CD4-positive, alpha-beta memory T cell (primary cell): ENCODE measurements at regions of chr1 and their contacts with region 1.

Region 1: DNA sequence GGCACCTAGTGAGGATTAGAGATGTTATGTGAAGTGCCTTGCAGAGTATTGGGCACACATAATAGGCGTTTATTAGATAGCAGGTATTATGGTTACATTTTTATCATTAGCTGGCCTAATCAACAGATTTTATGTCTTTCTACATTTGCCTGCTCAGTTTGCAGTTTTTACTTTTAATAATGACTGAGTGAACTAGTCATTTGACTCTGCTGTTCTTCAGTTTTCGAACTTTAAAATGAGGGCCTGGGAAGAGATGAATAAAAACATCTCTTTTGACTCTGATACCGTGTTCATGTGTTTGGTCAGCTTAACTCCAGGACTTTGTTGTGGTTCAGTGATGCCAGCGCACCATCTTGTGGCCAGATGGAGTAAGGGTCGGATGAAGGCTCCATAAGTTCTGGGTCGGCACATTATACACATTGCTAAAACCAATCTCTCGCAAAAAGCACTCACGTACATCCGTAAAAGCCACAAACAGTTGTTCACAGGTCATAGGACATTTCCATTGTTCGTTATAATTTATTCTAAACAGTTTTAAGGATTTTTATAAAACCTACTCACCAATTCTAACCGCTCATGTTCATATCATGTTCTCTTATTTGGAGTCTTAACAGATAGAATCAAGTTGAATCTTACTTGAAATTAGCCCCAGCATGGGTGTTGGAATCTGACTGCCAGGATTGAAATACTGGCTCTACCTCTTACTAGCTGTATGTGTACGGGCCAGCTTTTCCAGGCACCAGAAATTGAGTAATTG is 78.4 kb upstream of the GPR88 start:
- DNase-seq: peak; percentile 57 to 70 (median 62)
- H3K4me3 ChIP-seq: no peak overlapping the region
- H3K4me3 Mint-ChIP-seq: peak overlapping the region in 7 of 8 donors; percentile 40 to 75 (median 63)
- H3K27ac ChIP-seq: peak overlapping the region; percentile 8
- H3K27ac Mint-ChIP-seq: peak overlapping the region; percentile 65 to 91 (median 90)
- H3K4me1 ChIP-seq: peaks cover 70% of the 10 kb centered on the region
- H3K4me1 Mint-ChIP-seq: peaks cover 44 to 86% (median 60%) of the 10 kb centered on the region in 4 donors
- H3K27me3 ChIP-seq: no peaks in the 10 kb centered on the region
- H3K27me3 Mint-ChIP-seq: no peaks in the 10 kb centered on the region

Region 2: GRCh38 chr1:100037927-100038659 is 421.4 kb before region 1 on chr1:
- CTCF ChIA-PET with region 1: interaction called, 3 read pairs
- POLR2A ChIA-PET with region 1: no interaction called
- intact Hi-C with region 1: loop called (anchors 5 kb)
- DNase-seq: peak; percentile 88 to 90 (median 89)
- H3K4me3 ChIP-seq: peak overlapping the region; percentile 43 to 75
- H3K4me3 Mint-ChIP-seq: peak overlapping the region; percentile 91 to 100 (median 98)
- H3K27ac ChIP-seq: peak overlapping the region; percentile 99
- H3K27ac Mint-ChIP-seq: peak overlapping the region; percentile 98 to 100 (median 99)
- H3K4me1 ChIP-seq: peaks cover 50% of the 10 kb centered on the region
- H3K4me1 Mint-ChIP-seq: peaks cover 33 to 66% (median 46%) of the 10 kb centered on the region in 4 donors
- H3K27me3 ChIP-seq: no peaks in the 10 kb centered on the region
- H3K27me3 Mint-ChIP-seq: no peaks in the 10 kb centered on the region

Region 3: DNA sequence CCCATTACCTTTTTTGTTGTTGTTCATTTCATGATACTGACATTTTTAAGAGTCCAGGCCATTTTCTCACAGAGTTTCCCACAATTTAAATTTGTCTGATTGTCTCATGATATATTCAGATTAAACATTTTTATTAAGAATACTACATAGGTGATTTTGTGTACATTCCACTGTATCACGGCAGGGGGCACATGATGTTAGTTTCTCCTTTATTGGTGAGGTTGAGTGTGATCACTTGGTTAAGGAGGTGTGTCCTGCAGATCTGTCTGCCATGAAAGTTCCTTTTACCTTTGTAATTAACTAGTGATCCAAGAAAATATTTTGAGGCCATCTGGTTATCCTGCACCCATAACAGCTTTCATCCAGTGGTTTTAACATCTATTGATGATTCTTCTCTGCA is 181.7 kb before region 1 on chr1:
- CTCF ChIA-PET with region 1: interaction called, 20 read pairs
- POLR2A ChIA-PET with region 1: no interaction called
- intact Hi-C with region 1: loop called (anchors 1 kb)
- DNase-seq: peak; percentile 26 to 52 (median 40)
- H3K4me3 ChIP-seq: no peak overlapping the region
- H3K4me3 Mint-ChIP-seq: no peak overlapping the region
- H3K27ac ChIP-seq: no peak overlapping the region
- H3K27ac Mint-ChIP-seq: peak overlapping the region in 3 of 7 donors; percentile 55 to 81 (median 64)
- H3K4me1 ChIP-seq: peaks cover 9% of the 10 kb centered on the region
- H3K4me1 Mint-ChIP-seq: peaks cover 27 to 45% (median 34%) of the 10 kb centered on the region in 4 donors
- H3K27me3 ChIP-seq: no peaks in the 10 kb centered on the region
- H3K27me3 Mint-ChIP-seq: no peaks in the 10 kb centered on the region

Region 4: GRCh38 chr1:100387209-100387608 is 72.3 kb before region 1 on chr1:
- CTCF ChIA-PET with region 1: interaction called, 30 read pairs
- POLR2A ChIA-PET with region 1: interaction called, 11 read pairs
- intact Hi-C with region 1: no loop called
- DNase-seq: no peak
- H3K4me3 ChIP-seq: no peak overlapping the region
- H3K4me3 Mint-ChIP-seq: peak overlapping the region; percentile 67 to 80 (median 73)
- H3K27ac ChIP-seq: peak overlapping the region; percentile 65
- H3K27ac Mint-ChIP-seq: peak overlapping the region; percentile 89 to 95 (median 93)
- H3K4me1 ChIP-seq: peaks cover 98% of the 10 kb centered on the region
- H3K4me1 Mint-ChIP-seq: peaks cover 69 to 98% (median 87%) of the 10 kb centered on the region in 4 donors
- H3K27me3 ChIP-seq: no peaks in the 10 kb centered on the region
- H3K27me3 Mint-ChIP-seq: no peaks in the 10 kb centered on the region

Region 5: GRCh38 chr1:100423832-100424337 is 35.7 kb before region 1 on chr1:
- CTCF ChIA-PET with region 1: interaction called, 85 read pairs
- POLR2A ChIA-PET with region 1: interaction called, 272 read pairs
- intact Hi-C with region 1: loop called (anchors 1 kb)
- DNase-seq: peak; percentile 54 to 65 (median 61)
- H3K4me3 ChIP-seq: peak overlapping the region; percentile 45 to 66
- H3K4me3 Mint-ChIP-seq: peak overlapping the region; percentile 89 to 100 (median 94)
- H3K27ac ChIP-seq: peak overlapping the region; percentile 68
- H3K27ac Mint-ChIP-seq: peak overlapping the region; percentile 90 to 99 (median 97)
- H3K4me1 ChIP-seq: peaks cover 80% of the 10 kb centered on the region
- H3K4me1 Mint-ChIP-seq: peaks cover 52 to 84% (median 63%) of the 10 kb centered on the region in 4 donors
- H3K27me3 ChIP-seq: no peaks in the 10 kb centered on the region
- H3K27me3 Mint-ChIP-seq: no peaks in the 10 kb centered on the region

Region 6: DNA sequence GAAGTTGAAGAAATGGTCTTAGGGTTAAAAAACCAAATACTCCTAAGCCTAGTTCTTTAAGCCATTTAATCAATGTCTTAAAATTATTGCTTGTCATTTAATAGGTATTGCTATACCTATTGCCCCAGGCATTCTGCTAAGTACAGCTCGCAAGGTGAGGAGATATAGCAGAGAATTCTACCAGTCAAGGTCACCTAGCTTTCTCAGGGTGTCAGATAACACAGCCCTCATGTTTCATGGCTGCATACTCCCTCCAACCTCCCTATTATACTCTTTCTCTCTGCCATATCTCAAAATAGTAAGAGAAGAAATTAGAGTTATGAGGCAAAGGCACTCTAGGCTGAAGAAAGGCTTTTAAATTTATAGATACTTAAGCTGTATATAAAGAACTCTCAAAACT is 10.0 kb after region 1 on chr1:
- CTCF ChIA-PET with region 1: interaction called, 26 read pairs
- POLR2A ChIA-PET with region 1: interaction called, 5 read pairs
- intact Hi-C with region 1: no loop called
- DNase-seq: no peak
- H3K4me3 ChIP-seq: no peak overlapping the region
- H3K4me3 Mint-ChIP-seq: peak overlapping the region in 1 of 8 donors; percentile 44
- H3K27ac ChIP-seq: no peak overlapping the region
- H3K27ac Mint-ChIP-seq: peak overlapping the region in 3 of 7 donors; percentile 39 to 87 (median 44)
- H3K4me1 ChIP-seq: peaks cover 8% of the 10 kb centered on the region
- H3K4me1 Mint-ChIP-seq: peaks cover 26 to 57% (median 42%) of the 10 kb centered on the region in 4 donors
- H3K27me3 ChIP-seq: no peaks in the 10 kb centered on the region
- H3K27me3 Mint-ChIP-seq: no peaks in the 10 kb centered on the region